ENCODE measurements at regions of chrX and their contacts with region 1.

Region 1: GRCh38 chrX:120468825-120469525 is at the start of gene LAMP2:
- DNase-seq: peak; percentile 60 to 89 (median 78)
- ATAC-seq: peak; percentile 97
- H3K4me3 ChIP-seq: peak within 1 kb of the TSS; percentile 77 to 83
- H3K4me3 Mint-ChIP-seq: peak within 1 kb of the TSS; percentile 86
- H3K27ac ChIP-seq: peak within 1 kb of the TSS; percentile 64 to 81
- H3K27ac Mint-ChIP-seq: peak within 1 kb of the TSS; percentile 86
- H3K4me1 ChIP-seq: peaks cover 8% of the 10 kb centered on the region
- H3K4me1 Mint-ChIP-seq: peaks cover 32% of the 10 kb centered on the region
- H3K27me3 ChIP-seq: no peaks in the 10 kb centered on the region
- H3K27me3 Mint-ChIP-seq: no peaks in the 10 kb centered on the region
- CTCF ChIP-seq: no peak
- total RNA-seq, gene LAMP2: 12.7 to 13.4 TPM

Region 2: DNA sequence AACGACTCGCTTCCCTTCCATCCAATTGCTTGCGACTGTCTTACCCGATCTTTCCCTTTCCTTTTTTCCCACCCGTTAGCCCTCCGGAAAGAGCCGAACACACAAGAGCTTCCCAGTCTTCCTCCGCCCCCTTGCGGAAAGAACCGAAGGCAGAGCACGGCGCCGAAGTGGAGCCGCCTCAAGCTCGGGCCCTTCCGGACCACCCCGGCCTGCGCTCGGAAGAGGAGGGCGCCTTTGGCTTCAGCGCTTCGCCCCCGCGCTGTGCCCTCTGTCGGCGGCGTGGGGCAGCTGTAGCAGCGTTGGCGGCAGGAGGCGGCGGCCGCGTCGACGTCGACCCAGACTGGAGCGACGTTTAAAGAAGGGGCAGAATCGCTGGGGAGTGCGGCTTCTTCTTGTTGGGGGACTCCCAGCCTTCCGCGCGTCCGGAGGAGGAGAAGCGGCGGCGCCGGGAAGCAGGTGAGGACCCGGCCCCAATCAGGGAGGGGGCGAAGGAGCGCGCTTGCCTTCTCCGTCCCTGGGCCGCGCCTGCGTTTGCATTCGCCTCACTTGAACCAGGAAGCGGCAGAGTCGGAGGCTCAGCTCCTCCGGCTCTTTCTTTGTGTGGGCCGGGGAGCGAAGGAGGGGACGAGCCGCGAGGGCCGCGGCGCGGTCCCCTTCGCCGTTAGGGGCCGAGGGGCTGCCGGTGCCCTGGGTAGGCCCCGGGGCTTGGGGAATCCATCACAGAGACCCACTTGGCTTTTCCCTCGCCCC is 218.3 kb before region 1 on chrX and contains the start of gene ZBTB33:
- CTCF ChIA-PET with region 1: no interaction called
- POLR2A ChIA-PET with region 1: no interaction called
- intact Hi-C with region 1: loop called (anchors 2 kb)
- DNase-seq: peak; percentile 68 to 94 (median 79)
- ATAC-seq: peak; percentile 99
- H3K4me3 ChIP-seq: peak within 1 kb of the TSS; percentile 58 to 68
- H3K4me3 Mint-ChIP-seq: peak within 1 kb of the TSS; percentile 92
- H3K27ac ChIP-seq: peak within 1 kb of the TSS; percentile 82 to 91
- H3K27ac Mint-ChIP-seq: peak within 1 kb of the TSS; percentile 98
- H3K4me1 ChIP-seq: no peaks in the 10 kb centered on the region
- H3K4me1 Mint-ChIP-seq: peaks cover 37% of the 10 kb centered on the region
- H3K27me3 ChIP-seq: no peaks in the 10 kb centered on the region
- H3K27me3 Mint-ChIP-seq: peaks cover 2% of the 10 kb centered on the region
- CTCF ChIP-seq: peak; percentile 52
- total RNA-seq, gene ZBTB33: 26.4 to 30.7 TPM

Region 3: GRCh38 chrX:120308959-120309872 is 159.8 kb before region 1 on chrX:
- CTCF ChIA-PET with region 1: no interaction called
- POLR2A ChIA-PET with region 1: no interaction called
- intact Hi-C with region 1: loop called (anchors 2 to 5 kb)
- DNase-seq: peak; percentile 37 to 89 (median 66)
- ATAC-seq: peak; percentile 94
- H3K4me3 ChIP-seq: peak overlapping the region; percentile 59 to 61
- H3K4me3 Mint-ChIP-seq: peak overlapping the region; percentile 79
- H3K27ac ChIP-seq: peak overlapping the region in 1 of 2 experiments; percentile 36
- H3K27ac Mint-ChIP-seq: peak overlapping the region; percentile 84
- H3K4me1 ChIP-seq: peaks cover 5% of the 10 kb centered on the region
- H3K4me1 Mint-ChIP-seq: peaks cover 10% of the 10 kb centered on the region
- H3K27me3 ChIP-seq: no peaks in the 10 kb centered on the region
- H3K27me3 Mint-ChIP-seq: peaks cover 20% of the 10 kb centered on the region
- CTCF ChIP-seq: peak; percentile 42

Region 4: GRCh38 chrX:120452131-120452530 is 16.8 kb before region 1 on chrX:
- CTCF ChIA-PET with region 1: interaction called, 11 read pairs
- POLR2A ChIA-PET with region 1: interaction called, 3 read pairs
- intact Hi-C with region 1: loop called in 1 of 2 experiments (anchors 1 kb)
- DNase-seq: peak in 2 of 9 experiments; percentile 17 to 35
- ATAC-seq: no peak
- H3K4me3 ChIP-seq: no peak overlapping the region
- H3K4me3 Mint-ChIP-seq: no peak overlapping the region
- H3K27ac ChIP-seq: no peak overlapping the region
- H3K27ac Mint-ChIP-seq: peak overlapping the region; percentile 0
- H3K4me1 ChIP-seq: peaks cover 3% of the 10 kb centered on the region
- H3K4me1 Mint-ChIP-seq: peaks cover 20% of the 10 kb centered on the region
- H3K27me3 ChIP-seq: no peaks in the 10 kb centered on the region
- H3K27me3 Mint-ChIP-seq: no peaks in the 10 kb centered on the region
- CTCF ChIP-seq: no peak

Region 5: GRCh38 chrX:120457766-120458180 is 11.2 kb before region 1 on chrX:
- CTCF ChIA-PET with region 1: interaction called, 11 read pairs
- POLR2A ChIA-PET with region 1: interaction called, 4 read pairs
- intact Hi-C with region 1: loop called in 1 of 2 experiments (anchors 1 kb)
- DNase-seq: peak in 3 of 9 experiments; percentile 16 to 39 (median 20)
- ATAC-seq: peak; percentile 86
- H3K4me3 ChIP-seq: no peak overlapping the region
- H3K4me3 Mint-ChIP-seq: no peak overlapping the region
- H3K27ac ChIP-seq: peak overlapping the region in 1 of 2 experiments; percentile 10
- H3K27ac Mint-ChIP-seq: peak overlapping the region; percentile 78
- H3K4me1 ChIP-seq: peaks cover 24% of the 10 kb centered on the region
- H3K4me1 Mint-ChIP-seq: peaks cover 62% of the 10 kb centered on the region
- H3K27me3 ChIP-seq: no peaks in the 10 kb centered on the region
- H3K27me3 Mint-ChIP-seq: no peaks in the 10 kb centered on the region
- CTCF ChIP-seq: no peak

Region 6: DNA sequence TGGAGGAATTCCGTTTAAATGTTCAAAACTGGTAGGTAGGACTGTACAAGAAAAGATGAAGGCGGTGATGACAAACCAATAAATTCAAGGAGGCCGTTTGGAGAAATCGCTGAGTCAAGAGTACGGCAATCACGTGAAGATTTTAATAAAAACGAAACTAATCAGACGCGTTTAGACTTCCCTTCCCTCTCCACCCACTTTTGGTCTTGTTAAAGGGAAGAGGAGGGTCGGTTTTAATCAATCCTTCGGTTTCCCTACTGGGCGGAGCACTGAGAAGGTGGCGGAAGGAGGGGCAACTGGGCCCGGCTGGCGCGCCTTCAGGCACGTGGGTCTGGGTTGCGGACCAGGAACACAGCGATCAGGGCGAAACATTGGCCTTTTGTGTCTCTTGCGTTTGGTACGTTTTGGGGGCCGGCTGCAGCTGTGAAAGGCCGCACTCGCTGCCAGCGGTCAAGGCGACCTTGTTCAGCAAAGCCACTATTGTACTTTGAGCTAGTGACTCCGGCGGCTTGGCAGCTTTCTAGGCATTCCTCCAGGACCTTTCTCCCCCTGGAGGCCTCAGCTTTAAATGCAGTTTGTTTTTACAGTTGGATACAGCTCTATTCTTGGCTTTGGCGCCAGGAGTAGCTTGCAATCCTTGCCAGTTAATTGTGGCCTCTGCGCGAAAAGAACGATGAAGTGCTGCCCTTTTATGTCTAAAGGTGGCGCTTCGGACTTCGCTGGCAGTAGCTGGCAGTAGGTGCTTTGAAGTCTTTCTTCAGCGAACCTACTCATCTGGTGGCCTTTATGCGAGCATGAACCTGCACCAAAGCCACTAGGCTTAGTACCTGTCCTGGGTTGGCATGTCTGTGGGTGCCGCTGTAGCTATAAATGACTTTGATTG is 16.9 kb after region 1 on chrX:
- CTCF ChIA-PET with region 1: no interaction called
- POLR2A ChIA-PET with region 1: interaction called, 4 read pairs
- intact Hi-C with region 1: loop called in 1 of 2 experiments (anchors 1 kb)
- DNase-seq: peak in 8 of 9 experiments; percentile 8 to 77 (median 44)
- ATAC-seq: peak; percentile 76
- H3K4me3 ChIP-seq: peak overlapping the region; percentile 71 to 75
- H3K4me3 Mint-ChIP-seq: peak overlapping the region; percentile 92
- H3K27ac ChIP-seq: peak overlapping the region; percentile 68 to 89
- H3K27ac Mint-ChIP-seq: peak overlapping the region; percentile 94
- H3K4me1 ChIP-seq: peaks cover 25% of the 10 kb centered on the region
- H3K4me1 Mint-ChIP-seq: peaks cover 26% of the 10 kb centered on the region
- H3K27me3 ChIP-seq: no peaks in the 10 kb centered on the region
- H3K27me3 Mint-ChIP-seq: no peaks in the 10 kb centered on the region
- CTCF ChIP-seq: peak; percentile 50

Measured in CD8-positive, alpha-beta T cell (primary cell).